Left lung (tissue), 14 donors: ENCODE measurements at regions of chr5 and their contacts with region 1.

Region 1: GRCh38 chr5:137659209-137659608 is 76.7 kb downstream of the KLHL3 start:
- DNase-seq: no peak
- ATAC-seq: no peak
- H3K4me3 ChIP-seq: no peak overlapping the region
- H3K27ac ChIP-seq: no peak overlapping the region
- H3K4me1 ChIP-seq: no peaks in the 10 kb centered on the region
- H3K27me3 ChIP-seq: no peaks in the 10 kb centered on the region
- CTCF ChIP-seq: no peak

Region 2: DNA sequence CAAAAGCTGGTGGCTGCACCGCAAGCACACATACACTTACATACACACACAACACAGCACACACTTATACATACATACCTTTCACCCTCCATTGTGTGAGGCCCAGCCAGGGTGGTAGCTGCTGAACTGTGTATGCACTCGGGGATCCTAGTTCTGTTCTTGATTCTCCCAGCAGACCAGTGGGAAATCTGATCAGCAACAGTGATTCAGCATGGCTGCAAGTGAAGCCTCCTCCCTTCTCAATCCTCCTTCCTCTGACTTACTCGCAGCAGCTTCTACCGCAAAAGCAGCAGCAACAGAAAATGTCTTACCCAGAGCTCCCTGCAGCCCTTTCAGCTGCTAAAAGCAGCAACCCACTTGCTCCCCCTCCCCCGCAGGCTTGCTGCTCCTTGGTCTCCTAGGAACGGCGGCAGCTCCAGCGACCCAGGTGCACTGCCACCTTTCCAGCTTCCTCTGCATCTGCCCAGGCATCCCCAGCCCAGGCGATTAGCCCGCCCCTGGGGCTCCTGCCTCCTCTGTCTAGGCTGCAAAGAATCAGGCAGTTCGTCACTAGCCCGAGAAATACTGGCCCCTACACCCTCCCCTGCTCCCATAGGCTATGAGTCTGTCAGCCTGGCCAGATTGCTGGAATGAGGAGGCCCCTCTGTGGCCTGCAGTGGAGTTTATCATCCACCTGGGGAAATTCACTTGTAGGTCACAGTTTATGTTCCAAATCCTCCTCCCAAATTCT is 76.5 kb after region 1 on chr5 and contains the start of gene KLHL3:
- intact Hi-C with region 1: loop called in 1 of 2 experiments (anchors 5 kb)
- DNase-seq: peak; percentile 37 to 78 (median 50)
- ATAC-seq: peak; percentile 73
- H3K4me3 ChIP-seq: peak within 1 kb of the TSS; percentile 17 to 36
- H3K27ac ChIP-seq: peak within 1 kb of the TSS; percentile 28 to 70
- H3K4me1 ChIP-seq: peaks cover 8 to 45% of the 10 kb centered on the region in 2 donors
- H3K27me3 ChIP-seq: peaks cover 0 to 6% of the 10 kb centered on the region in 2 donors
- CTCF ChIP-seq: no peak
- polyA plus RNA-seq, gene KLHL3: 27.0 to 35.7 (median 32.5) TPM